Activated B cell treated with CpG ODN at 0.5 μM for 24 hours (primary cell): ENCODE measurements at regions of chr2 and their contacts with region 1.

Region 1: GRCh38 chr2:219597552-219598307 is at the start of gene STK11IP:
- DNase-seq: peak; percentile 83
- ATAC-seq: peak; percentile 91
- H3K4me3 Mint-ChIP-seq: peak within 1 kb of the TSS; percentile 96
- H3K27ac Mint-ChIP-seq: peak within 1 kb of the TSS; percentile 97
- H3K4me1 Mint-ChIP-seq: peaks cover 23% of the 10 kb centered on the region
- H3K27me3 Mint-ChIP-seq: peaks cover 13% of the 10 kb centered on the region
- CTCF ChIP-seq: no peak
- total RNA-seq, gene STK11IP: 43.3 and 53.6 TPM in 2 replicates

Region 2: DNA sequence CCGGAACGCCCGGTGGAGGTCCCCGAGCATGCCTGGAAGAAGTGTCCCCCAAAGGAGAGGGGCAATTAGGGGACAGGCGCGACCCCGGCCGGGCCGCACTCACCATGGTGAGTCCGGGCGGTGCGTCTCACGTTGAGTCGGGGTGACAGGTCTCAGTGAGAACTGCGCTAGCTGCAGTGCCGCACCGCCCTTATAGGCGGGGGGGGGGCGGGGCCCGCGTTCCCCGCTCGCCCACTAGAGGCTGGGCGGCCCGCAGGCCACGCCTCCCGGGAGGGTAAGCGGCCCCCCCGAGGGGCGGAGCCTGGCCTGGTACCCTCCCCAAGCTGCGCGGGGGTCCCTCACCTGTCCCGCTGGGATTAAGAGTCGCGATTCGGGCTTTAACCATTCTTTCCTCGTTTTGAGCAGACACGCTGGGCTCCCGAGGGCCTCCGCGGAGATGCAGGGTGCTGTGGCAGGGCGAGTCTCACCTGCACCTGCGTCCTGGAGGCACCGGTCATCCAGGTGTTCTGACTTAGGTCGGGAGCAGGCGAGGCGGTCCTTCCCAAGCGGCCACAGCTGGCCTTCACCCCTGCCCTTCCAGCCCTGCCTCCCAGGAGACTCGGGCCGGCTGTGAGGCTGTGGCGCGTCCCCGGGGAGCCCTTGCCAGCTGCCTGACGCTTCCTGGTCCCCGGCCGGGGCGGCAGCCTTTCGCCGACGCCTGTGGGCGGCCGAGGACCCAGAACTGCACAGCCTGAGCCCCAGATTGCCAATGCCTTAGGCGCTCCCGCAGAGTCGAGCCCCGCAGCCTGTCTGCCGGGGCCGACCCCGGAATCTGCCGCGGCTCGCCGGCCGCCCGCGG is 343.8 kb before region 1 on chr2 and contains the start of gene TUBA4A:
- CTCF ChIA-PET with region 1: no interaction called
- POLR2A ChIA-PET with region 1: no interaction called
- intact Hi-C with region 1: loop called (anchors 1 kb)
- DNase-seq: peak; percentile 90
- ATAC-seq: peak; percentile 69
- H3K4me3 Mint-ChIP-seq: peak within 1 kb of the TSS; percentile 82
- H3K27ac Mint-ChIP-seq: peak within 1 kb of the TSS; percentile 98
- H3K4me1 Mint-ChIP-seq: peaks cover 53% of the 10 kb centered on the region
- H3K27me3 Mint-ChIP-seq: no peaks in the 10 kb centered on the region
- CTCF ChIP-seq: no peak
- total RNA-seq, gene TUBA4A: 184 and 192 TPM in 2 replicates

Region 3: DNA sequence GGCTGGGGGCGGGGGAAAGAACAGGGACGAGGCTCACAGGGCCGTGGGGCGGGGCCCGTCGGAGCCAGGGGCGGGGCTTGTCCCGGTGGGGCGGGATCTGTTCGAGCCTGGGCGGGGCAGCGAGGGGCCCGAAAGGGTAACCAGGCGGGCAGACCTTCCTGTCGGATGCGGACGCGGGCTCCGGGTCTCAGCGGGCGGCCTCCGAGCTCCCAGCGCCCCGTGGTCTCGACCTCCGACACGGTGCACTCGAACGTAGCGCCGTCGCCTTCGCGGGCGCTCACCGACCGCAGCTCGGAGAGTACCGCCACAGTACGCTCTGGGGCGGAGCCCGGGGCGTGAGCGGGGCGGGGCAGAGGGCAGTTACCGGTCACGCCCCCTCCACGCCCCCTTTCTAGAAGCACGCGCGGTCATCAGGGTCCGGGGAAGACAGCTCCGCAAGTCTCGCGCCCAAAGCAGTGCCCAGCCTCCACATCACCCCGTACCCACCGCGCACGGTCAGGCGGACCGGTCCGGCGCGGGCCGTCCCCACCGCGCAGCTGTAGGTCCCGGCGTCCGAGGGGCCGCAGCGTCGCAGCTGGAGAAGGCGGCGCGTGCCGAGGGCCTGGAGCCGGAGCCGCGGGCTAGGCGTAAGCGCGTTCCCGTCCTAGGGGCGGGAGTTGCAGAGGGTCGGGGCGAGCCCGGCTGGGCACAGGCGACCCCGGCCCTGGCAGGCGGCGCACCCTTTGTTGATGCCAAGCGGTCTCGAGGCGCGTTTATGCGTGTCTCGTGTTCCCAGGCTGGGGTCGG is 45.2 kb before region 1 on chr2:
- CTCF ChIA-PET with region 1: no interaction called
- POLR2A ChIA-PET with region 1: no interaction called
- intact Hi-C with region 1: loop called (anchors 1 kb)
- DNase-seq: peak; percentile 72
- ATAC-seq: peak; percentile 91
- H3K4me3 Mint-ChIP-seq: peak overlapping the region; percentile 71
- H3K27ac Mint-ChIP-seq: no peak overlapping the region
- H3K4me1 Mint-ChIP-seq: peaks cover 7% of the 10 kb centered on the region
- H3K27me3 Mint-ChIP-seq: peaks cover 55% of the 10 kb centered on the region
- CTCF ChIP-seq: no peak

Region 4: GRCh38 chr2:219642465-219643080 is 44.8 kb after region 1 on chr2:
- CTCF ChIA-PET with region 1: no interaction called
- POLR2A ChIA-PET with region 1: no interaction called
- intact Hi-C with region 1: loop called (anchors 1 kb)
- DNase-seq: peak; percentile 80
- ATAC-seq: peak; percentile 100
- H3K4me3 Mint-ChIP-seq: peak overlapping the region; percentile 13
- H3K27ac Mint-ChIP-seq: peak overlapping the region; percentile 13
- H3K4me1 Mint-ChIP-seq: peaks cover 15% of the 10 kb centered on the region
- H3K27me3 Mint-ChIP-seq: peaks cover 20% of the 10 kb centered on the region
- CTCF ChIP-seq: peak; percentile 77

Region 5: DNA sequence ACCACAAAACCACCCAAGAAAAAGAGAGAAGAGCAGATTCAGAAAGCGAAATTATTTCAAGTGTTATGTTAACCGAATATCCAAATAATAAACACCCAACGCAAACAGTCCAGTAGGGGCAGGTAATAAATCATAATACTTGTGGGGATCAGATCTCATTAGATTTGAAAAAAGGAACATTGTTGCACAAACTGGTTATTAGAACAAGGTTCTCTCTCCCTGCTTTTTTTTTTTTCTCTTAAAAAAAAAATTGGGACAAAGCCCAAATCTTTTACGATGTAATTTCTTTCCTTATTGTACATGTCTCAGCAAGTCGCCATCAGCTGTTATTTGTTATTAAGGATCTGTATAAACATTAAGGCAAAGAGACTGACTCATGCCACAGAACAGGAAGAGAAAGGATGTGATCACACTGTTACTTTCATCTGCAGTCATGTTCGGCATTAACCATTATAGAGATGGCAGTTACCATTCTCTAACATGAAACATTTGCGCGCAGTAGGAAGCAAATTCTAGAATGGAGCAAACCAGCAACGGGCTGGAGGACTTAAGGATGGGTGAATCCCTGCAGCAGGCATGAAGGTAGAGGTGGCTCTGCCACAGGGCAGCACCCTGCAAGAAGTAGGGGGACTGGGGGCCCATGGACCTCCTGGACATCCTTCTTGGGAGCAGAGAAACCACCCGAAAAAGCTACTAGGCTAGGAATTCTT is 1932.4 kb after region 1 on chr2:
- CTCF ChIA-PET with region 1: no interaction called
- POLR2A ChIA-PET with region 1: no interaction called
- intact Hi-C with region 1: no loop called
- DNase-seq: no peak
- ATAC-seq: no peak
- H3K4me3 Mint-ChIP-seq: peak overlapping the region; percentile 42
- H3K27ac Mint-ChIP-seq: peak overlapping the region; percentile 19
- H3K4me1 Mint-ChIP-seq: peaks cover 42% of the 10 kb centered on the region
- H3K27me3 Mint-ChIP-seq: no peaks in the 10 kb centered on the region
- CTCF ChIP-seq: no peak